ENCODE measurements at regions of chr17 and their contacts with region 1.

Region 1: GRCh38 chr17:67602956-67603355 is 114.8 kb upstream of the NOL11 start:
- DNase-seq: no peak
- ATAC-seq: no peak
- H3K4me3 ChIP-seq: no peak overlapping the region
- H3K27ac ChIP-seq: peak overlapping the region in 1 of 10 donors; percentile 5
- H3K4me1 ChIP-seq: peaks cover 0 to 58% (median 36%) of the 10 kb centered on the region in 9 donors
- H3K27me3 ChIP-seq: no peaks in the 10 kb centered on the region
- CTCF ChIP-seq: peak in 7 of 9 donors; percentile 29 to 48 (median 36)

Region 2: GRCh38 chr17:67475236-67475937 is 127.6 kb before region 1 on chr17:
- intact Hi-C with region 1: loop called in 2 of 10 experiments (anchors 10 kb)
- DNase-seq: peak; percentile 76 to 83
- ATAC-seq: peak; percentile 54 to 85 (median 70)
- H3K4me3 ChIP-seq: peak overlapping the region in 1 of 10 donors; percentile 13
- H3K27ac ChIP-seq: peak overlapping the region; percentile 54 to 88 (median 80)
- H3K4me1 ChIP-seq: peaks cover 0 to 54% (median 31%) of the 10 kb centered on the region in 9 donors
- H3K27me3 ChIP-seq: no peaks in the 10 kb centered on the region
- CTCF ChIP-seq: peak; percentile 65 to 94 (median 85)

Region 3: DNA sequence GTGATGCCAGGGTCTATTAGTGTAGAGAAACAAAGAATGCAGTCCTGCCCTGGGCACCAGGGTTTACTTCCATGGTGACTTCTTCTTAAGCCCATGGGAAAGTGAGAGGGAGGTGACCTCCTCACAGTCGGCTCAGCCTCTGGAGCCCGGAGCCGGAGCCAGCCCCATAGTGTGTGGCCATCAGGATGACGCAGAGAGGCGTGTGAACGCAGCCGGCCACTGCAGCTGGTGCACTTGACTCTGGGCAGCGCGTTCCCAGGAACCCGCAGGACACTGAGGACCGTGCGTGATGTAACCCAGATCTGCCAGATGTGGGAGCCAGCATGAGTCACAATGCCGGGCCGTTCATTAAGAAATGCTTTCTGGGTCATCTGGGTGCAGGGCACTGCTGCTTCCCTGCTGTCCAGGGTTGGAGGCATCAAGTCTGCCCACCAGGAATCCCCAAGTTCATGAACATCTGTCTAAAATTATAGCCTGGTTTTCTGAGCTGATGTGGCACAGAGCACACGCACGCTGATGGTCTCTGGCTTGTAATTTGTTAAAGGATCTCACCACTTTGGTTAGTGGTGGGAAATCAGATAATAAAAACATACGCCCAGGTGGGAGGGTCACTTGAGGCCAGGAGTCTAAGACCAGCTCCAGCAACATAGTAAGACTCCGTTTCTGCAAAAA is 111.8 kb before region 1 on chr17:
- intact Hi-C with region 1: loop called in 4 of 10 experiments (anchors 5 to 10 kb)
- DNase-seq: peak; percentile 88 to 89
- ATAC-seq: peak; percentile 92 to 99 (median 95)
- H3K4me3 ChIP-seq: peak overlapping the region in 8 of 10 donors; percentile 8 to 49 (median 38)
- H3K27ac ChIP-seq: peak overlapping the region in 9 of 10 donors; percentile 35 to 81 (median 73)
- H3K4me1 ChIP-seq: peaks cover 0 to 60% (median 47%) of the 10 kb centered on the region in 9 donors
- H3K27me3 ChIP-seq: no peaks in the 10 kb centered on the region
- CTCF ChIP-seq: no peak

Region 4: GRCh38 chr17:67546578-67547527 is 56.1 kb before region 1 on chr17:
- intact Hi-C with region 1: loop called in 1 of 10 experiments (anchors 10 kb)
- DNase-seq: peak; percentile 54 to 72
- ATAC-seq: peak; percentile 44 to 90 (median 80)
- H3K4me3 ChIP-seq: no peak overlapping the region
- H3K27ac ChIP-seq: peak overlapping the region in 8 of 10 donors; percentile 29 to 67 (median 49)
- H3K4me1 ChIP-seq: peaks cover 0 to 48% (median 32%) of the 10 kb centered on the region in 9 donors
- H3K27me3 ChIP-seq: no peaks in the 10 kb centered on the region
- CTCF ChIP-seq: peak in 3 of 9 donors; percentile 23 to 36 (median 29)

Region 5: DNA sequence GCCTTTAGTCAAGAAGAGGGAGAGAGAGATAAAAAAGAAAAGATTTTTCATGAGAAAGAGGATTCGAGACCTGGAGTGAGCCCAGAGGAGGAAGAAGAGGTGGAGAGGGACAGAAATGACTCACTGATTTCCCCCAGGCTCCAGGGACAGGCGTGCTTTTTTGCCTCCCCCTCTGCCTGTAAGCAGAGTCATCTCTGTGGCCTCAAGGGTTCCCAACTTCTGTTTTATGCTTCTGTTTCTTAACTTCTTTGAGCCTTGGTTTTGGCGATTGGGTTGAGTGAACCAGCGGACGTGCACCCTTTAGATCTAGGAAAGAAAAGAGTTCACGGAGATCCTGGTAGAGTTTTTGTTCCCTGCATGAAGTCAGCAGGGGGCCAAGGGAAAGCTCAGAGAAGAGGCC is 33.1 kb before region 1 on chr17:
- intact Hi-C with region 1: no loop called
- DNase-seq: no peak
- ATAC-seq: no peak
- H3K4me3 ChIP-seq: no peak overlapping the region
- H3K27ac ChIP-seq: no peak overlapping the region
- H3K4me1 ChIP-seq: peaks cover 0 to 20% (median 0%) of the 10 kb centered on the region in 9 donors
- H3K27me3 ChIP-seq: no peaks in the 10 kb centered on the region
- CTCF ChIP-seq: no peak

Region 6: DNA sequence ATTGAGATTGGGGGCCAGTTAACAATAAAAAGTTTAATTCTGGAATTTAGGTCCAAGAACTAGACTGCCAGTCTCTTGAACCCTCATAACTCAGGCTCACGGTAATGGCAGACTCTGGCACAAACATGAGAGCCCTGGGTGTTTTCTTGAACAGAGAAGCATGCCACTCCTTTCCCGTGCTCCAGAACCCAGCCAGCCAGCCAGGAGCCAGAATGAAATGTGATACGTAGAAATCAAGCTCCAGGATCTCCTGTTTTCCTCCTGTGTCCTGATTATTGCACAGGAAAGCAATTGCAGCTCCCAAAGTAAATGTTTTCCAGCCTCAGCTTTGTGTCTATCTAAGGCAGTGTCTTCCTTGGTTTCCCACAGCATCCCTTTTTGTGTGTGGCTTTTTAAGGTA is 68.5 kb after region 1 on chr17:
- intact Hi-C with region 1: loop called in 1 of 10 experiments (anchors 10 kb)
- DNase-seq: no peak
- ATAC-seq: peak in 2 of 8 donors; percentile 20 to 38
- H3K4me3 ChIP-seq: no peak overlapping the region
- H3K27ac ChIP-seq: peak overlapping the region in 1 of 10 donors; percentile 44
- H3K4me1 ChIP-seq: peaks cover 0 to 31% (median 10%) of the 10 kb centered on the region in 9 donors
- H3K27me3 ChIP-seq: no peaks in the 10 kb centered on the region
- CTCF ChIP-seq: no peak

Measured in heart right ventricle (tissue), 16 donors.